ENCODE measurements at regions of chr6 and their contacts with region 1.

Region 1: DNA sequence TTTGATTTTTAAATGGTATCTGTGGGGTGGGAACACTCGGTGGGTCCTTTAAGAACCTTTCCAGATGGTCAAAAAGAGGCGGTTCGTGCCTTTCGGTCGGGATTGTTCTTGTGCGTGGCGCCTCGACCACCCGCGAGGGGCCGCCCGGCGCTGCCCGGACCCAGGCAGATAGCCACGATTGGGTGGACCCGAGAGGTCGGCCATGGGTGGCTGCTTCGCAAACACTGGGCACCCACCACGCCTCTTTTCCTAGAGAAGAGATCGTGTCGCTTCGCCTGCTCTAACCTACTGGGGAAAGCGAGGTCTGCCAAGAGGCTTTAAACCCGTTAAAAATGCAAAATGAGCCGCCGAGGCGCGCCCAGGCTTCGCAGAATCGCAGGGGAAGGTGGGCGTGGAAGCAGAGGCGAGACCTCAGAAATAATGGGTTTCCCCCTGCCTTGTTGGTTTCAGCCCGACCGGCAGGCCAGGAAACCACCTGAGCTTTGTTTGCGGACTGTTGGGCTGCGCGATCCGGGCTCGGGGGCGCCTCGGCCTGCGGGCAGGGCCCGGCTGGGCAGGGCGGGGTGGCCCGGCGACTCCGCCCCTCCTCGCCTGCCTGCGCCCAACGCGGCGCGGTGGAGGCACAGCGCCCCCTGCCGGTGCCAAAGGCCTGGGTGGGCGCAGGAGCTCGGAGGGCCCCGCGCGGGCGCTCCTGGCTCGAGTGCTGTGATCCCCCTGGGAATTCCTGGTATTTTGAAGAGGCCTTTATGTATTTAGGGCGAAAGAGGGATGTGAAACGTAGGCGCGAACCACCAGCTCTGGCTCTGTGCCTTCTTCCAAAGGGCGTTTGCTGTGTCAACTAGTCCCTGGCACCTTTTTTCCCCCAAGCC is 1.6 kb downstream of the MARCKS start:
- DNase-seq: peak; percentile 74
- H3K4me3 Mint-ChIP-seq: peak overlapping the region; percentile 81
- H3K27ac Mint-ChIP-seq: peak overlapping the region; percentile 52
- H3K4me1 Mint-ChIP-seq: peaks cover 16% of the 10 kb centered on the region
- H3K27me3 Mint-ChIP-seq: peaks cover 42% of the 10 kb centered on the region

Region 2: DNA sequence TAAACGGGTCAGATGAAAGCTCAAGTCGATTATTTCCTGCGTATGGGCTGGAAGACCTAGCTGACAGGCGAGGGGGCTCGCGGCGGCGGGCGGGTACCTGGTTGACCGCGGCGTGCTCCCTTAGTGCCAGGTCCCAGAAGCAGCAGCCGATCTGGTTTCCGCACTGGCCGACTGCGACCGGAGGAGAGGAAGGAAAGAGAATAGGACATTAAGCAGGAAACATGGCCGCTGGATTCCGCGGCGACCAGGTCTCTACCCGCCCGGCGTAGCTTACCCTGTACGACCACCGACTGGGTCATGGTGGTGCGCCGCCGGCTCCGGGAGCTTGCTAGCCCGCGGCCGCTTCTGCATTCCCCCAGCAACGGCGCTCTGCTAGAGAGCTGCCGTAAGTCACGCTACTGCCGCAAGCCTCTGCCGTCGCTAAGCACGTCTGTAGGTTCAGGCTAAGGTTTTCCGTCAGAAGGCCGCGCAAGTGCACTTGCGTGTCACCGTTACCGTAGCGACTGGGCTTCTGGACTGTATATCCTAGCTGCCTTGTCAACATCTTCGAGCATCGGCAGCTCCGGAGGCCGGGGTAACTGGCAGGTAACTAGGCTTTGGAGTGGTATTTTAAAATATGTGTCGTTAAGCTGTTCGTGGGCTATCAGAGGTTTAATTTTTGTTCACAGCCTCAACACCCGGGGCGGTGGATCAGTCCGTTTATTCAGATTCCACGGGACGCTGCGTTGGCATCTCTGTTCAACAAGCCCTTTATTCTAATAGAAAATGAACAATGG is 1771.4 kb before region 1 on chr6 and contains the starts of genes FAM229B and TUBE1:
- intact Hi-C with region 1: loop called (anchors 2 kb)
- DNase-seq: peak; percentile 86
- H3K4me3 Mint-ChIP-seq: no peak within 1 kb of the TSS
- H3K27ac Mint-ChIP-seq: no peak within 1 kb of the TSS
- H3K4me1 Mint-ChIP-seq: no peaks in the 10 kb centered on the region
- H3K27me3 Mint-ChIP-seq: peaks cover 14% of the 10 kb centered on the region
- total RNA-seq, gene FAM229B: 1.1 and 2.2 TPM in 2 replicates
- total RNA-seq, gene TUBE1: 24.4 and 26.2 TPM in 2 replicates

Region 3: GRCh38 chr6:112282221-112282620 is 1576.5 kb before region 1 on chr6:
- intact Hi-C with region 1: loop called (anchors 10 kb)
- DNase-seq: no peak
- H3K4me3 Mint-ChIP-seq: no peak overlapping the region
- H3K27ac Mint-ChIP-seq: no peak overlapping the region
- H3K4me1 Mint-ChIP-seq: peaks cover 16% of the 10 kb centered on the region
- H3K27me3 Mint-ChIP-seq: peaks cover 55% of the 10 kb centered on the region

Region 4: DNA sequence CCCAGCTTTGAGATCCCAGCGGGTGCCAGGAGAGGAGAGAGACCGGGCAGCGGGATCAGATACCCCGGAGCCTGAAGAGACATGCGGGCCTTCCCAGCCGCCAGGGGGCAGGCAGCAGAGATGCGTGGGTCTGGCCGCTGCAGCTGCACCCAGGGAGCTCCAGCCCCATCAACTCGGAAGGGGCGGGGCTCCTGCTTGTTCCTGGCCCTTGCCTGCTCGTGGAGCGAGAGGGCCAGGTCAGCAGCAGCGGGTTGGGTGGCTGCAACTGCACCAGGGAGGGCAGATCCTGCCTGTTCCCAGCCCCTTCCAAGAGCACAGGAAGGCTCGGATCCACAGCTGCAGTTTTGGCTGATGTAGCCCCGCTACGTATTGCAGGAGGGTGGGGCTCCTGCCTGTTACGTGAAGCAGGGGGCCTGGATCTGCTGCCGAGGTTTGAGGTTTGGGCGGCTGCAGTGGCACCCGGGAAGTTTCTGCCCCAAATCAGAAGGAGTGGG is 978.7 kb before region 1 on chr6:
- intact Hi-C with region 1: loop called (anchors 2 kb)
- DNase-seq: no peak
- H3K4me3 Mint-ChIP-seq: peak overlapping the region; percentile 30
- H3K27ac Mint-ChIP-seq: no peak overlapping the region
- H3K4me1 Mint-ChIP-seq: no peaks in the 10 kb centered on the region
- H3K27me3 Mint-ChIP-seq: no peaks in the 10 kb centered on the region

Region 5: GRCh38 chr6:113632220-113632864 is 226.4 kb before region 1 on chr6:
- intact Hi-C with region 1: loop called (anchors 5 kb)
- DNase-seq: no peak
- H3K4me3 Mint-ChIP-seq: no peak overlapping the region
- H3K27ac Mint-ChIP-seq: peak overlapping the region; percentile 49
- H3K4me1 Mint-ChIP-seq: peaks cover 17% of the 10 kb centered on the region
- H3K27me3 Mint-ChIP-seq: no peaks in the 10 kb centered on the region

Region 6: DNA sequence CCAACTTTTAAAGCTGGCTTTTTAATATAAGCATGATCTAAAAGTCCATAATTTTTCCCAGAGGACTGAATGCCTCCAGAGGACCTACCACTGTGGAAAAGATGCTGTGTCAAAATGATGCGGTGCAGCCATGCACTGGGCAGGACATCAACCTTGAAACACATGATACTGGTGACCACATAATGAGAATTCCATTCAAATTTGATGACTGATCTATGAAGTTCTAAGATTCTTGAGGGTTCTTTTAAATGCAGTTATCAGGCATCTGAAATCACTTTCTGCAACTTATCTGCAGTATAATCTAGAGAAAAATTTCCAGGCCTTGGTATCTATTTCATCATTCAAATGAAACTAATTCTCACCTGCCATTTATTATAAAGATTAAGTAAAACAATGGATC is 16.6 kb before region 1 on chr6:
- intact Hi-C with region 1: no loop called
- DNase-seq: no peak
- H3K4me3 Mint-ChIP-seq: no peak overlapping the region
- H3K27ac Mint-ChIP-seq: no peak overlapping the region
- H3K4me1 Mint-ChIP-seq: no peaks in the 10 kb centered on the region
- H3K27me3 Mint-ChIP-seq: peaks cover 8% of the 10 kb centered on the region